ENCODE measurements at regions of chr17 and their contacts with region 1.

Region 1: DNA sequence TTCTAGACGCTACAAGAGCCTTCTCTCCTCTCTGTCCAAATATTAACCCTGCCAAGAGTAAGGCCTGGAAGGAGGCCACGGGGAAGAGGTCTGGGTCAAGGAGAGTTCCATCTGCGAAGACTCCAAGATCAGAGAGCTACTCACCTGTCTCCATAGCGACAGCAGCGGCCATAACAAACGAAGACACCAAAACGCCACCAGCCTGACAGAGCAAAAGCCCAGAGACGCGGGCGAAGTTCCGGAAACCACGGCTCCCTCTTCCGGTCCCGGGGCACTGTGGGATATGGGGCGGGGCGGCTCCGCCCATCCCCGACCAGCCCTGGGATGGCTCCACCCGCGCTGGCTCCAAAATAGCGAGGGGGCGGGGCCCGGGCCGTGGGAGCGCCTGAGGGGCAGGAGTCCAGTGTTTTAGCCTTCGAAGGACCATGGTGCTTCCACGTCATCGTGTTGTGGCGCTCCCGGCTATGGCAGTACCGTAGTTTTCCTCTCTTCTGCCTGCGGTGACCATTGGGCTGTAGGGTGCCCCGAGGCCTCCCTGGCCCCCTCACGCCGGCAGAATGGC is at the starts of genes C17orf100 and MED31:
- DNase-seq: peak; percentile 77 to 98
- H3K4me3 ChIP-seq: peak within 1 kb of the TSS; percentile 62 to 94
- H3K27ac ChIP-seq: peak within 1 kb of the TSS; percentile 73 to 78
- H3K4me1 ChIP-seq: peaks cover 0 to 21% of the 10 kb centered on the region in 2 donors
- H3K27me3 ChIP-seq: no peaks in the 10 kb centered on the region
- CTCF ChIP-seq: peak in 1 of 3 experiments; percentile 4
- total RNA-seq, gene C17orf100: 4.3 TPM
- total RNA-seq, gene MED31: not detected

Region 2: DNA sequence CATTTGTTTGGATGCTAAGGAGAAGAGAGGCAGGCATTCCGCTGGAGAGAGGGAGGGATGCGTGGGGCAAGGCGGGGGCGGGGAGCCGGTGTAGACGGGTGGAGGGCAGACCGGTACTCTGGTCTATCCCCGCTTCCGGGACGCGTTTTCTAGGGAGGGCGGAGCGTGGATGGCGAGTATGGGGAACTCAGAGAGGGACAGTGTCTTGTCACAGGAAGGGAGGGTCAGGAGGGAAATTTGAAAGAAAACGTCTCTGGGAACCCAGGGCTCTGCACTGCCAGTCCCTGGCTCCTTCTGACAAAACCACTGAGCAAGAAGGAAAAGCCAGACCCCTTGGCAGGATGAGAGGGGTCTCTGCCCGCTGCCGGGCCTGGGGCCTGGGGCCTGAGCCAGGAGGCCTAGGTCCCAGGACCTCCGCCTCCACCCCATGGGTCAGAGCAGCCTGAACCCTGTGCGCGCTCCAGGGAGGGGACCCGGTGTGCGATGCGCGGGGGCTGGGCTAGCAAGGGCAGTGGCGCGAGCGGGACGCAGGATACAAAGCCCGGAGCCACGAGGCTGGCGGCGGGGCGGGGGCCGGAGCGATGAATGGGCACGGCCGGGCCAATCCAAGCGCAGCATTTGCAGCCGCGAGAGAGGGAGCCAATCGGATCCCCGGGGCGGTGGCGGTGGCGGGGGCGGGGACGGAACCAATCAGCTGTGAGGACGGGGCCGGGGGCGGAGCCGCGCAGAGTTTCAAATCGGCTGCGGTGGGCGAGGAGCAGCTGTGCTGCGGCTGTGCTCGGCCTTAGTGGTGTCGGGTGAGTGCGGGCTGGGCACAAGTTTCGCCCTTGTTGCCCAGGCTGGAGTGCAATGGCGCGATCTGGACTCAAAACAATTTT is 207.5 kb before region 1 on chr17 and contains the start of gene PIMREG:
- intact Hi-C with region 1: loop called (anchors 5 kb)
- DNase-seq: peak; percentile 75 to 95
- H3K4me3 ChIP-seq: peak within 1 kb of the TSS; percentile 55 to 73
- H3K27ac ChIP-seq: peak within 1 kb of the TSS in 1 of 2 donors; percentile 35
- H3K4me1 ChIP-seq: peaks cover 0 to 5% of the 10 kb centered on the region in 2 donors
- H3K27me3 ChIP-seq: no peaks in the 10 kb centered on the region
- CTCF ChIP-seq: no peak
- total RNA-seq, gene PIMREG: not detected

Region 3: DNA sequence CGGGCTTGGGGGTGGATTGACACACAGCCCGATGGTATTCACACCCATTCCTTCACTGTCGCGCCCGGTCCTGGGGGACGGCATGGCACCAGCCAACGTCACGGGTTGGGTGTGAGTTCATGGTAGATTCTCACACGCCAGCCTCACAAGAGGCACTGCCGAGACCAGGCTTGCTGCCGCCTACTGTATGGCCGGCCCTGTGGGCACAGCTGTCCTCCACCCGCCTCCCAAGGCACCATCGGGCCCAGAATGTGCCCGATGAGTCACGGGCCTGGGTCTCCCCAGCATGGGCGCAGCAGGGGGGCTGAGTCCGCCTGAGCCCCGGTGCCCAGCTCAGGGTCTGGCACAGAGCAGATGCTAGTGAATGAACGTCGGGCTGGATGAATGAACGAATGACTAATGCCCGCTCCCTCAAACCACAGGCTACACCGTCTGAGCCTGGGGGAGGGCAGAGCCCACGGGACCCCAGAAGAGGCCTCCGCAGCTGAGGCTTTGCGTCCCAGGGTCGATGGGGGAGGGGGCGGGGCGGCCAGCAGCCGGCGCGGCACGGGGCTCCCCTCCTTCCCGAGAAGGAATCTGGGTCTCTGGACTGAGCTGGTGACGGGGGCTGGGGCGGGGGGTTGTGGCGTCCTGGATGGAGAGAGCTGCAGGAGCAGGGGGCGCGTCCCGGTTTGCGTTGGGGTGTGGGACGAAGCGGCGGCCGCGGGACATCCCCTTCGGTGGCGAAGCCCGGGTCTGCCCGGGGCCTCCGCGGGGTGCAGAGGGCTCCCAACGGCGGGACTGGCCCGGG is 95.9 kb before region 1 on chr17:
- intact Hi-C with region 1: no loop called
- DNase-seq: no peak
- H3K4me3 ChIP-seq: peak overlapping the region; percentile 63 to 83
- H3K27ac ChIP-seq: no peak overlapping the region
- H3K4me1 ChIP-seq: peaks cover 0 to 13% of the 10 kb centered on the region in 2 donors
- H3K27me3 ChIP-seq: no peaks in the 10 kb centered on the region
- CTCF ChIP-seq: no peak

Region 4: GRCh38 chr17:6591599-6592158 is 59.8 kb before region 1 on chr17:
- intact Hi-C with region 1: no loop called
- DNase-seq: no peak
- H3K4me3 ChIP-seq: no peak overlapping the region
- H3K27ac ChIP-seq: no peak overlapping the region
- H3K4me1 ChIP-seq: no peaks in the 10 kb centered on the region
- H3K27me3 ChIP-seq: no peaks in the 10 kb centered on the region
- CTCF ChIP-seq: no peak

Region 5: DNA sequence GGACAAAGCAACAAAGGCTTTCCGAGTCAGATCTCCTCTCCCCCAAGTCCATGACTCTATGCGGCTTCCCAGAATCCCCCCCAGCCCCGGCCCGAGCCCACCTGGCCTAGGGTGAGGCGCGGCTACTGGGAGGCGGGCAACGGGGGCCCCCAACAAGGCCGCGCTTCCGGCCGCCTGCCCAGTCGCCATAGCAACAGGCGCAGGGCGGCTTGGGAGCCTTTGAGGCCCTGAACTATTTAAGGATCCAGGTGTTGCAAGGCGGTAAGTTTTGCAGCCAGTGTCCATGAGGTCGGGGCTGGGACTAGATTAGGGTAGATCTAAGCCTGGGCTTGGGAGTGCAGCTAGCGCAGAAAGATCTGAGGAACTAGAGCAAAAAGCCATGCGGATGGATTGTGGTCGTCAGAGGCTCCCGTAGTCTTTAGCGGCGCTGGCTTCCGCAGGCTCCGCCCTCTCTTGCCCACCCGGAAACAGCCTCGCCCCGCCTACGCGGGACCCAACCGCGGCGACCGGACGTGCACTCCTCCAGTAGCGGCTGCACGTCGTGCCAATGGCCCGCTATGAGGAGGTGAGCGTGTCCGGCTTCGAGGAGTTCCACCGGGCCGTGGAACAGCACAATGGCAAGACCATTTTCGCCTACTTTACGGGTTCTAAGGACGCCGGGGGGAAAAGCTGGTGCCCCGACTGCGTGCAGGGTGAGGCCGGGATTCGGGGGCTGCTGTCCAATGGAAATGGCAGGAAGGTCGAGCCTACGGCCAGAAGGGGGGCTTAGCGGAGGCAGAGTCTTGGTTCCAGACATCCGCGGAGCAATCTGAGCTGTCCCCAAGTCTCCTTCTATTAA is 10.7 kb before region 1 on chr17 and contains the starts of genes KIAA0753 and TXNDC17:
- intact Hi-C with region 1: loop called (anchors 1 kb)
- DNase-seq: peak; percentile 55 to 96
- H3K4me3 ChIP-seq: peak within 1 kb of the TSS; percentile 64 to 93
- H3K27ac ChIP-seq: peak within 1 kb of the TSS; percentile 74 to 84
- H3K4me1 ChIP-seq: peaks cover 7 to 17% of the 10 kb centered on the region in 2 donors
- H3K27me3 ChIP-seq: no peaks in the 10 kb centered on the region
- CTCF ChIP-seq: no peak
- total RNA-seq, gene KIAA0753: 2.9 TPM
- total RNA-seq, gene TXNDC17: 0.96 TPM

Region 6: DNA sequence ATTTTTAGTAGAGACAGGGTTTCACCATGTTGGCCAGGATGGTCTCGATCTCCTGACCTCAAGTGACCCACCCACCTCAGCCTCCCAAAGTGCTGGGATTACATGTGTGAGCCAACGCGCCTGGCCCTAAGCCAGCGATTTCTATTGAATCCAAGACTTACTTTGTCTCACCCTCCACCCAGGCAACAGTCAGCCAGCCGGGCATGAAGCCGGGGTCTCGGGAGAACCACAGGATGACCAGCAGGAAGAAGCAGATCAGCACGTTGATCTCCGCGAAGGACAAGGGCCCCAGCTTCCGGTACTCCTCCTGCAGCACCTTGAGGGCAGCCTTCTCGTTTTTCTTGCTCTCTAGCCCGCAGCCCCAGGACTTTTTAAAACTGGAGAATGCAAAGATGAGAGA is 44.1 kb after region 1 on chr17:
- intact Hi-C with region 1: no loop called
- DNase-seq: no peak
- H3K4me3 ChIP-seq: no peak overlapping the region
- H3K27ac ChIP-seq: no peak overlapping the region
- H3K4me1 ChIP-seq: no peaks in the 10 kb centered on the region
- H3K27me3 ChIP-seq: no peaks in the 10 kb centered on the region
- CTCF ChIP-seq: no peak

Region 7: DNA sequence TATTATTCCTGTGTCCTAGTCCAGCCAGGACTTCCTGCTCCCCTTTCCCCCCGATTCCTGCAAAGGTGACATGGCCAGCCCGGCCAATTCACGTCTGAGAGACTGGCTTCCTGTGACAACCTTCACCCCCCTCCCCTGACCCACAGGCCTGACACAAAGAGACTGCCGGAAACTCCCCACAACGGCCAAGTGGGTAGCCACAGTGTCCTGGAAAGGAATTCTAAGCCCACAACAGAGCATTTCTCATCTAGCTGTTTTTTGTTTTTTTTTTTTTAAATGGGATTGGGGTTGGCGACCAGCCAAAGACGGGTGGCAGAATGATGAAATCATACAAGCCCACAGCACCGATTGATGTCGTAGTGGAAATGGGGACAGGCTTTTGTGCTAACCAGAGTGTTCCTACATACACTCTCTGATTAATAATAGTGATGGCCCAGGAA is 101.6 kb after region 1 on chr17:
- intact Hi-C with region 1: loop called (anchors 5 kb)
- DNase-seq: peak in 1 of 2 donors; percentile 78
- H3K4me3 ChIP-seq: peak overlapping the region in 1 of 2 donors; percentile 20
- H3K27ac ChIP-seq: peak overlapping the region; percentile 82 to 85
- H3K4me1 ChIP-seq: peaks cover 4 to 30% of the 10 kb centered on the region in 2 donors
- H3K27me3 ChIP-seq: no peaks in the 10 kb centered on the region
- CTCF ChIP-seq: no peak

Measured in ascending aorta (tissue), 2 donors.